ENCODE measurements at regions of chrX and their contacts with region 1.

Region 1: DNA sequence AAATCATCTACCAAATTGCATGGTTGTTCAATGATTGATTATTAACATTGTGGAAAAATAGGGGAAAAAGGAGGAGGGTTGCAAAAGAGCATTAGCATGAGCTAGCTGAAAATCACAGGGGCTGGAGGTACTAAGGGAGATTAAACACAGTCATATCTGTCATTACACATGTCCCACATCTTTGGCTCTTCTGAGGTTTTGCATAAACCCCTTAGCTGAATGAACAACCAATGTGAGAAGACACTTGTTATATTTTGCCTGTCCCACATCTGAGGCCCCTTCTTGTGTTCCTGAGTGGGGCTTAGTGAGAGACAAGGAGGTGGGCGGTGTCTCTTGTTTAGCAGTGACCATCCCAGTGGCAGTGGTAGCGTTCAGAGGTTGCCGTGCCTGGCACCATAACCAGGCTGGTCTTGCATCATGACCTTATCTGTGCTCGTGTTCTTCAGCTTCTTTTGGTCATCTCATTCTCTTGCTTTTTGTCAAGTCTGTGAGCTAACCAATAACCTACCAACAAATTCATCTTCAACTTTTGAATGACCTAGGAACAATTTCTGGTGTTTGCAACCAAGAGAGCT is 95.6 kb downstream of the MID1IP1 start:
- DNase-seq: no peak
- H3K4me3 ChIP-seq: no peak overlapping the region
- H3K4me3 Mint-ChIP-seq: no peak overlapping the region
- H3K27ac Mint-ChIP-seq: no peak overlapping the region
- H3K4me1 ChIP-seq: no peaks in the 10 kb centered on the region
- H3K4me1 Mint-ChIP-seq: no peaks in the 10 kb centered on the region
- H3K27me3 ChIP-seq: no peaks in the 10 kb centered on the region
- H3K27me3 Mint-ChIP-seq: no peaks in the 10 kb centered on the region
- CTCF ChIP-seq: no peak

Region 2: GRCh38 chrX:38848671-38849455 is 47.9 kb before region 1 on chrX:
- CTCF ChIA-PET with region 1: no interaction called
- POLR2A ChIA-PET with region 1: no interaction called
- intact Hi-C with region 1: no loop called
- DNase-seq: no peak
- H3K4me3 ChIP-seq: no peak overlapping the region
- H3K4me3 Mint-ChIP-seq: no peak overlapping the region
- H3K27ac Mint-ChIP-seq: no peak overlapping the region
- H3K4me1 ChIP-seq: peaks cover 15% of the 10 kb centered on the region
- H3K4me1 Mint-ChIP-seq: peaks cover 15% of the 10 kb centered on the region
- H3K27me3 ChIP-seq: no peaks in the 10 kb centered on the region
- H3K27me3 Mint-ChIP-seq: no peaks in the 10 kb centered on the region
- CTCF ChIP-seq: no peak

Region 3: GRCh38 chrX:38929966-38930421 is 33.2 kb after region 1 on chrX:
- CTCF ChIA-PET with region 1: no interaction called
- POLR2A ChIA-PET with region 1: no interaction called
- intact Hi-C with region 1: loop called (anchors 1 kb)
- DNase-seq: no peak
- H3K4me3 ChIP-seq: no peak overlapping the region
- H3K4me3 Mint-ChIP-seq: no peak overlapping the region
- H3K27ac Mint-ChIP-seq: no peak overlapping the region
- H3K4me1 ChIP-seq: no peaks in the 10 kb centered on the region
- H3K4me1 Mint-ChIP-seq: no peaks in the 10 kb centered on the region
- H3K27me3 ChIP-seq: no peaks in the 10 kb centered on the region
- H3K27me3 Mint-ChIP-seq: no peaks in the 10 kb centered on the region
- CTCF ChIP-seq: no peak